ENCODE measurements at regions of chr19 and their contacts with region 1.

Region 1: GRCh38 chr19:45643024-45643926 is 4.1 kb upstream of the EML2 start:
- DNase-seq: peak; percentile 94
- H3K4me3 ChIP-seq: peak overlapping the region; percentile 59 to 65
- H3K27ac ChIP-seq: peak overlapping the region in 1 of 2 experiments; percentile 85; a peak in 2 of 4 replicates
- H3K4me1 ChIP-seq: peaks cover 6 to 17% of the 10 kb centered on the region in 2 experiments; a peak in 1 of 4 replicates
- H3K27me3 ChIP-seq: no peaks in the 10 kb centered on the region
- CTCF ChIP-seq: peak; percentile 99
- EP300 ChIP-seq: no peak
- RAD21 ChIP-seq: peak; percentile 97

Region 2: GRCh38 chr19:45423589-45424190 is 219.6 kb before region 1 on chr19 and contains the start of gene ERCC1:
- CTCF ChIA-PET with region 1: no interaction called
- POLR2A ChIA-PET with region 1: no interaction called
- DNase-seq: peak; percentile 98
- H3K4me3 ChIP-seq: peak within 1 kb of the TSS; percentile 67 to 85
- H3K27ac ChIP-seq: peak within 1 kb of the TSS; percentile 92 to 100
- H3K4me1 ChIP-seq: peaks cover 15 to 20% of the 10 kb centered on the region in 2 experiments
- H3K27me3 ChIP-seq: no peaks in the 10 kb centered on the region
- CTCF ChIP-seq: no peak
- EP300 ChIP-seq: peak; percentile 21 to 28; a peak in 1 of 4 replicates
- RAD21 ChIP-seq: no peak
- polyA plus RNA-seq, gene ERCC1: 93.1 and 95.3 TPM in 2 replicates

Region 3: GRCh38 chr19:45547976-45548609 is 95.2 kb before region 1 on chr19:
- CTCF ChIA-PET with region 1: no interaction called
- POLR2A ChIA-PET with region 1: no interaction called
- DNase-seq: no peak
- H3K4me3 ChIP-seq: no peak overlapping the region
- H3K27ac ChIP-seq: no peak overlapping the region
- H3K4me1 ChIP-seq: no peaks in the 10 kb centered on the region
- H3K27me3 ChIP-seq: no peaks in the 10 kb centered on the region
- CTCF ChIP-seq: no peak
- EP300 ChIP-seq: no peak
- RAD21 ChIP-seq: no peak

Region 4: GRCh38 chr19:45591004-45591637 is 52.2 kb before region 1 on chr19:
- CTCF ChIA-PET with region 1: interaction called, 12 read pairs
- POLR2A ChIA-PET with region 1: no interaction called
- DNase-seq: peak; percentile 79
- H3K4me3 ChIP-seq: no peak overlapping the region
- H3K27ac ChIP-seq: no peak overlapping the region
- H3K4me1 ChIP-seq: no peaks in the 10 kb centered on the region
- H3K27me3 ChIP-seq: no peaks in the 10 kb centered on the region
- CTCF ChIP-seq: peak; percentile 42; the same call in 1 of the 2 replicates
- EP300 ChIP-seq: no peak
- RAD21 ChIP-seq: peak; percentile 65

Region 5: DNA sequence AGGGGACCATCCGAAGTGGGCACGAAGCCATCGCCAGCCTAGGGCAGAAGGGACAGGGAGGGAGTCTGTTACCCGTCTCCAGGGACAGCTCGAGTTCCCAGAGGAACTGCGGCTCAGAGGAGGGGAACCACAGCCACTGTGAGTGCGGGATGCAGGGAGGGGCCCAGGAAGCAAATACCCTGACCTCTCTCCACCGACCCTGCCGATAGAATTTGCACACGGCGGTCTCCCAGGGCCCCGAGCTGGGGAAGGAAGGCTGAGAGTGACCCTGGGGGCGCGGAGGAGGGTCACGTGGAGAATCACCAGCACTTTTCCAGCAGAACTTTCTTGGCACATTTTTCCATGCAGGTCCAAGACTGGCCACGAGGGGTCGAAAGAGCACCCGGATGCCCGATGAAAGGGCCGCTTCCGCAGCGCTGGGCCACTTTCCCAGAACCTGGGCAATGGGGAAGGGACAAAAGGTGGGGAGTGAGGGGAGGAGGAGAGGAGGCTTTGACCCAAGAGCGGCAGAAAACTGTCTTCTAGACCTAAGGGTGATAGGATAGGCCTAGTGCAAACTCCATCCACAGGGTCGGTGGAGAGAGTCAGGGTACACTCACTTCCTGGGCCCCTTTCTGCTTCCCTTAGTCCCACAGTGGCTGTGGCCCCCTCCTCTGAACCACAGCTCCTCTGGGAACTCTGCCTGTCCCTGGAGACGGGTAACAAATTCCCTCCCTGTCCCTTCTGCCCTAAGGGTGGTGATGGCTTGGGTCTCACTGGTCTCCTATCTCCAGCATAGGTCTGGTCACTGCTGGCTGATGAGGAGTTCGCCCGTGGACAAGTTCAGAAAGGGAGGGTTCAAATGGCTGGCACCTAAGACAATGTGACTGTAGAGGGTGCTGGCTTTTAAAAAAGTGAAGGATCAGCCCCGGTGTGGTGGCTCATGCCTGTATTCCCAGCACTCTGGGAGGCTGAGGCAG is 35.9 kb before region 1 on chr19:
- CTCF ChIA-PET with region 1: interaction called, 53 read pairs
- POLR2A ChIA-PET with region 1: no interaction called
- DNase-seq: peak; percentile 83
- H3K4me3 ChIP-seq: peak overlapping the region; percentile 24 to 44; a peak in 3 of 4 replicates
- H3K27ac ChIP-seq: no peak overlapping the region
- H3K4me1 ChIP-seq: peaks cover 5 to 7% of the 10 kb centered on the region in 2 experiments; a peak in 2 of 4 replicates
- H3K27me3 ChIP-seq: peaks cover 4% of the 10 kb centered on the region; the same call in 1 of the 2 replicates
- CTCF ChIP-seq: peak; percentile 86
- EP300 ChIP-seq: no peak
- RAD21 ChIP-seq: peak; percentile 77

Region 6: GRCh38 chr19:45632468-45633196 is 10.6 kb before region 1 on chr19:
- CTCF ChIA-PET with region 1: interaction called, 53 read pairs
- POLR2A ChIA-PET with region 1: interaction called, 3 read pairs
- DNase-seq: peak; percentile 96
- H3K4me3 ChIP-seq: no peak overlapping the region
- H3K27ac ChIP-seq: peak overlapping the region in 1 of 2 experiments; percentile 84; a peak in 2 of 4 replicates
- H3K4me1 ChIP-seq: peaks cover 3 to 19% of the 10 kb centered on the region in 2 experiments; a peak in 2 of 4 replicates
- H3K27me3 ChIP-seq: no peaks in the 10 kb centered on the region
- CTCF ChIP-seq: no peak
- EP300 ChIP-seq: no peak
- RAD21 ChIP-seq: no peak

Region 7: DNA sequence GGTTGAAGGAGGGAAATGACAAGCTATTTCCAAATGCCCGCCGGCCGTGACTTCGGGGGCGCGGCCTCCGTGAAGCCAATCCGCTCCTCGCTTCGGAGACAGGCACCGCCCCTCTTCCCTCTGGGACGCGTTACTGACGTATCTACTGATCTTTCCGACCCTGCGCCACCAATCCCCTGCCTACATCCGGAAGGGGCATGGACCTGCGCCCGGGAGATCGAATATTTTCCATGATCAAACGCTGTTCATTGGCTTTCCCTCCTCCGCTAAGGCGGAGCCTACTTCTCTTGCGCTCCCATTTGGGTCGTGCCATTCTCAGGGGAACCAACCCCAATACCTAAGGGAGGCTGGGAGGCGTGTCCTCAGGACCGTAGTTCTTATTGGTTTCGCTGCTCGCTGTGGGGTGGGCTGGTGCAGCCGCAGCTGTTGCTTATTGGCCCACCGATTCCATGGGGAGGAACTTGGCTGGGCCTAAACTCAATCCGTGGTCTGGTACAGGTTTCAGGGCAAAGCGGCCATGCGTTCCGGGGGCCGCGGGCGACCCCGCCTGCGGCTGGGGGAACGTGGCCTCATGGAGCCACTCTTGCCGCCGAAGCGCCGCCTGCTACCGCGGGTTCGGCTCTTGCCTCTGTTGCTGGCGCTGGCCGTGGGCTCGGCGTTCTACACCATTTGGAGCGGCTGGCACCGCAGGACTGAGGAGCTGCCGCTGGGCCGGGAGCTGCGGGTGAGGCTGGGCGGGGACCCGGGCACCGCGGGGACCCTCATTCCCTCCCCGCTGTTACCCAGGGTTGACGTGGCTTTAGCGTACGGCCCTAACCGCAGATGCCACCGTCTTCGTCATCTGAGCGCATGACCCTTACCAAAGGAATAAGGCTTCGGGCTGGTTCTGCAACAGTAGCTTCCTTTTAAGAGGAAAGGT is 49.2 kb after region 1 on chr19 and contains the start of gene QPCTL:
- CTCF ChIA-PET with region 1: interaction called, 11 read pairs
- POLR2A ChIA-PET with region 1: interaction called, 8 read pairs
- DNase-seq: peak; percentile 92
- H3K4me3 ChIP-seq: peak within 1 kb of the TSS; percentile 71 to 91
- H3K27ac ChIP-seq: peak within 1 kb of the TSS; percentile 86 to 87
- H3K4me1 ChIP-seq: peaks cover 0 to 6% of the 10 kb centered on the region in 2 experiments; a peak in 1 of 4 replicates
- H3K27me3 ChIP-seq: no peaks in the 10 kb centered on the region
- CTCF ChIP-seq: no peak
- EP300 ChIP-seq: no peak; a peak in 1 of 4 replicates
- RAD21 ChIP-seq: no peak
- polyA plus RNA-seq, gene QPCTL: 17.6 and 19.1 TPM in 2 replicates

Region 8: DNA sequence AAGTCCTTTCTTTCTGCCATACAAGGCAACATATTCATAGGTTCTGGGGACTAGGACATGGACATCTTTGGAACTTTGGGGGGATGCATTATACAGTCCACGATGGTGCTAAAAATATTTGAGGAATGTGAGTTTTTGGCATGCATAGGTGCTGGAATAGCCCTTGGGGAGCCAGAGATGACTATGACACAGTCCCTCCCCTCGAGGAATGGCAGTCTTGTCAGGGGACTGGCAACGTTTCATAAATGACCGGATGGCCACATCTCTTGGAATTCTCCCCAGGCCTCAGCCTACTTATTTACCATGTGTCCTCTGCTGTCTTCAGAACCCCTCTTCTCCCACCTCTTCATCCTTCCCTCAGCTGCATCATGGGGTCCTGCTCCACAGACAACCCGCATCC is 103.6 kb after region 1 on chr19:
- CTCF ChIA-PET with region 1: no interaction called
- POLR2A ChIA-PET with region 1: no interaction called
- DNase-seq: no peak
- H3K4me3 ChIP-seq: no peak overlapping the region
- H3K27ac ChIP-seq: no peak overlapping the region
- H3K4me1 ChIP-seq: no peaks in the 10 kb centered on the region
- H3K27me3 ChIP-seq: no peaks in the 10 kb centered on the region; the same call in 1 of the 2 replicates
- CTCF ChIP-seq: no peak
- EP300 ChIP-seq: no peak
- RAD21 ChIP-seq: no peak

Measured in SK-N-SH (cell line).